HCT116 (cell line): ENCODE measurements at regions of chr4 and their contacts with region 1.

Region 1: DNA sequence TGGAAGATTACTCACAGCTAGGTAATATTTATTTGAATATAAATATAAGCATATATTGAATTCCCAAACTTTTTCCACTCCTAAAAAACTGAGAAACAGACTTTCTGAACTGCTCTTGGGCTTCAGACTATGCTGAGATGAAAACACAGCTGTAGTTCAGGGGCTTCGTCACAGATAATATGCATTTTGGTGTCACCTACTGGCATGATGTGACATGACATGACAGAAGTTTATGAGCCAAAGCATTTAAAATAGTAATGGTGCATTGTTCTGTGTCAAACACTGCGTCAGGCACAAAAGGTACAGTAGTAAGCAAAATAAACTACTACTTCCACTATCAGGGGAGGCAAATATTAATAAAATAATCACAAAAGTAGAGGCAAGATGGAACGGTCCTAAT is 171.3 kb downstream of the BTC start:
- DNase-seq: peak; percentile 82
- ATAC-seq: peak; percentile 37
- H3K4me3 ChIP-seq: no peak overlapping the region
- H3K27ac ChIP-seq: peak overlapping the region; percentile 94
- H3K4me1 ChIP-seq: peaks cover 89 to 99% of the 10 kb centered on the region in 2 experiments
- H3K27me3 ChIP-seq: no peaks in the 10 kb centered on the region
- CTCF ChIP-seq: peak in 2 of 3 experiments; percentile 57 to 81; a peak in 4 of 6 replicates
- POLR2A ChIP-seq: no peak
- RAD21 ChIP-seq: no peak

Region 2: GRCh38 chr4:73698217-73698616 is 924.8 kb before region 1 on chr4:
- CTCF ChIA-PET with region 1: no interaction called
- POLR2A ChIA-PET with region 1: no interaction called
- RAD21 ChIA-PET with region 1: no interaction called
- intact Hi-C with region 1: no loop called
- DNase-seq: no peak
- ATAC-seq: no peak
- H3K4me3 ChIP-seq: no peak overlapping the region
- H3K27ac ChIP-seq: no peak overlapping the region
- H3K4me1 ChIP-seq: peaks cover 0 to 3% of the 10 kb centered on the region in 2 experiments; a peak in 1 of 4 replicates
- H3K27me3 ChIP-seq: no peaks in the 10 kb centered on the region
- CTCF ChIP-seq: no peak
- POLR2A ChIP-seq: no peak
- RAD21 ChIP-seq: no peak

Region 3: DNA sequence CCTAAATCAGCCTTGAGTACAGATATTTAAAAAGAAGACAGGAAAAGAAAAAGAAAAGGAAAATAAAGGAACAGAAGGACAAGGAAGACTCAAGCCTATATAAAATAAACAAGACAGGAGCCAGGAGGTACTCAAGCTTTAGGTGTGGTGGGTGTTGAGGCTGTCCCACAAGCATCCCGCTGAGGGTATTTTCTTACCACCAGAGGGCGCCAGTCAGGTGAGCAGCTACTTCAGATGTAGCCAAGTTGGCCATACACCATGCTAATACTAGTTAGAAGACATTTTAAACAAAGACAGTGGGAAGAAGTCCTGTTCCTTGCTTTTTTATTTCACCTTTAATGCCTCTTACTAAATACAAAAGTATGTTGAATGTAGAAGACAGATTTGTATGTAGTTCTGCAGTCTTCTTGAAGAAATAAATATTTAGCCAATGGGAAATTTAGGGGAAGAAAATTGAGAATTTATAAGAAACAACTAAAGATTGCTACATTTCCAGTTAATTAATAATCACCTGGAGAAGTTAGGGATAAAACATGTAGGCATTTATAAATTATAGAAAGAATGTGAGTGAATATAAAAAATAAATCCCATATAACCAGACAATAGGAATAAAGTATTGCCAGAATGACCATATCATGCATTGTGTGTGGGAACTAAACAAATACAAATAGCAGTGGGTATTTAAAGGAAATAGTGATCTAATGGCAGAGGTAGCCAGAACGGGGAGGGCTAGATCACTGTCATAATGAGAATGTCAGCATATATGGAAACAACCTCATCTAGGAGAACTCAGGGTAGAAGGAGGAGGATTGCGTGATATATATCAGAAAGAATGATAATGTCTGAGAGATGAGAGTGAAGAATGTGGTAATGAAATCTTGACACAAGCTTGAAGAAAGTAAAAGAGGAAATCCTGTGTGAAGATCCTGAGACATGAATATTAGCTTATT is 394.1 kb before region 1 on chr4:
- CTCF ChIA-PET with region 1: interaction called, 3 read pairs
- POLR2A ChIA-PET with region 1: no interaction called
- RAD21 ChIA-PET with region 1: no interaction called
- intact Hi-C with region 1: loop called (anchors 5 kb)
- DNase-seq: peak; percentile 72
- ATAC-seq: peak; percentile 92
- H3K4me3 ChIP-seq: no peak overlapping the region
- H3K27ac ChIP-seq: no peak overlapping the region
- H3K4me1 ChIP-seq: peaks cover 3 to 35% of the 10 kb centered on the region in 2 experiments
- H3K27me3 ChIP-seq: no peaks in the 10 kb centered on the region
- CTCF ChIP-seq: peak; percentile 81 to 97 (median 89); a peak in 5 of 6 replicates
- POLR2A ChIP-seq: no peak
- RAD21 ChIP-seq: peak; percentile 87

Region 4: DNA sequence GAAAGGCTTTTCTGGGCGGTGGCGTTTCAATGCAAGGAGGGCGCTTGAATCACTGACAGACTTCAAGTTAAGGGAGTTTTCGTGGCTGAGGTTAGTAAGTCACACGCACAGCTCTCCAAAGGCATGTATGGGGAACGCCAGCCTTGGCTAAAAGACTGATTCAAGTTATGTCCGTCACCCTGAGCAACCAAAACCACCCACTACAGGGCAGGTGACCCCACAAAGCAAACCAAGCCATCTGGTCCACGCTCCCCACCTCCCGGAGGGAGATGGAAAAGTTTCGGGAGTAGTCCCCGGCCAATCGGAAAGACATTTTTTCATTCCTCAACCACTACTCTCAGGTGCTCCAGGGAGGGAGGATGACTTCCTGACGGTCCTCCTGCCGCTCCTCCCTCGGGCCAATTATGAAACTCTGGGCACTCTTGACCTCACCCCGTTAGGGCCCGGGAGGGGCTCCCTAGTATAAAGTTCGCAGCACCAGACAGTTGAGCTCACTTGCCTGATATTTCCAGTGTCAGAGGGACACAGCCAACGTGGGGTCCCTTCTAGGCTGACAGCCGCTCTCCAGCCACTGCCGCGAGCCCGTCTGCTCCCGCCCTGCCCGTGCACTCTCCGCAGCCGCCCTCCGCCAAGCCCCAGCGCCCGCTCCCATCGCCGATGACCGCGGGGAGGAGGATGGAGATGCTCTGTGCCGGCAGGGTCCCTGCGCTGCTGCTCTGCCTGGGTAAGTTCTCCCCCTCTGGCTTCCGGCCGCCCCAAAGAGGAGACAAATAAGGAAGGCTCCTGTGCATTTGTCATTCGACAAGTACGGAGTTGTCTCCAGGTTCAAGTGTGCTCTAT is 258.2 kb before region 1 on chr4 and contains the start of gene EREG:
- CTCF ChIA-PET with region 1: no interaction called
- POLR2A ChIA-PET with region 1: interaction called, 15 read pairs
- RAD21 ChIA-PET with region 1: interaction called in 1 of 2 experiments, 3 read pairs
- intact Hi-C with region 1: no loop called
- DNase-seq: peak; percentile 74
- ATAC-seq: peak; percentile 71
- H3K4me3 ChIP-seq: peak within 1 kb of the TSS; percentile 76 to 91
- H3K27ac ChIP-seq: peak within 1 kb of the TSS; percentile 94
- H3K4me1 ChIP-seq: peaks cover 50 to 89% of the 10 kb centered on the region in 2 experiments
- H3K27me3 ChIP-seq: no peaks in the 10 kb centered on the region
- CTCF ChIP-seq: no peak
- POLR2A ChIP-seq: peak; percentile 76
- RAD21 ChIP-seq: no peak
- total RNA-seq, gene EREG: 498 TPM

Region 5: GRCh38 chr4:74394476-74395136 is 228.4 kb before region 1 on chr4:
- CTCF ChIA-PET with region 1: no interaction called
- POLR2A ChIA-PET with region 1: no interaction called
- RAD21 ChIA-PET with region 1: no interaction called
- intact Hi-C with region 1: loop called (anchors 5 kb)
- DNase-seq: peak; percentile 82
- ATAC-seq: peak; percentile 72
- H3K4me3 ChIP-seq: peak overlapping the region in 1 of 2 experiments; percentile 8; a peak in 2 of 4 replicates
- H3K27ac ChIP-seq: peak overlapping the region; percentile 86
- H3K4me1 ChIP-seq: peaks cover 30 to 66% of the 10 kb centered on the region in 2 experiments
- H3K27me3 ChIP-seq: no peaks in the 10 kb centered on the region
- CTCF ChIP-seq: no peak
- POLR2A ChIP-seq: no peak
- RAD21 ChIP-seq: peak; percentile 33; the same call in 1 of the 2 replicates

Region 6: GRCh38 chr4:74437866-74438265 is 185.2 kb before region 1 on chr4:
- CTCF ChIA-PET with region 1: no interaction called
- POLR2A ChIA-PET with region 1: no interaction called
- RAD21 ChIA-PET with region 1: no interaction called
- intact Hi-C with region 1: no loop called
- DNase-seq: no peak
- ATAC-seq: no peak
- H3K4me3 ChIP-seq: no peak overlapping the region
- H3K27ac ChIP-seq: no peak overlapping the region
- H3K4me1 ChIP-seq: no peaks in the 10 kb centered on the region
- H3K27me3 ChIP-seq: no peaks in the 10 kb centered on the region
- CTCF ChIP-seq: no peak
- POLR2A ChIP-seq: no peak
- RAD21 ChIP-seq: no peak

Region 7: DNA sequence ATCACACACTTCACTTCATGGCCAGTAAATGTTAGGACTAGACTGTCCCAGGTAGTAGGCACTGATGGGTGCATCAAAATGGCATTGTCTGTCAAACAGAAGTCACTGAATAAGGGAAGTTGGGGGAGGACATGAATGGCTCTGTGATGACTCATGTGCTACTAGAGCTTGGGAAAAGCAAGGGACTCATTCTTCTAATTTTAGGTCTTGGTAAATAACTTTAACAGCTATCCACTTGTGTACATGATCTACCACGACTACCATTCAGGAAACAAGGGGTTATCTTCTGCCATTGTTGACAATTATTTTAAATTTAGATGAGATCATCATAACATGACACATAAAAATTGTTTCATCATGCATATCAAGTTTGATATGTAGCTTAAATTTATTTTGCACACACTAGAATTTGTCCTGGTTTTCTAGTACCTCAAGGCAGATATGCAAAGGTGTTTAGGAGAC is 171.8 kb before region 1 on chr4:
- CTCF ChIA-PET with region 1: no interaction called
- POLR2A ChIA-PET with region 1: interaction called, 23 read pairs
- RAD21 ChIA-PET with region 1: no interaction called
- intact Hi-C with region 1: loop called (anchors 2 kb)
- DNase-seq: no peak
- ATAC-seq: peak; percentile 48
- H3K4me3 ChIP-seq: no peak overlapping the region; a peak in 1 of 4 replicates
- H3K27ac ChIP-seq: peak overlapping the region; percentile 85; the same call in 1 of the 2 replicates
- H3K4me1 ChIP-seq: peaks cover 86 to 99% of the 10 kb centered on the region in 2 experiments
- H3K27me3 ChIP-seq: no peaks in the 10 kb centered on the region
- CTCF ChIP-seq: no peak
- POLR2A ChIP-seq: no peak
- RAD21 ChIP-seq: 0 out of 2 replicates have a peak, but pooled peaks have one; percentile 7

Region 8: GRCh38 chr4:74543231-74543670 is 79.8 kb before region 1 on chr4:
- CTCF ChIA-PET with region 1: interaction called, 19 read pairs
- POLR2A ChIA-PET with region 1: interaction called, 145 read pairs
- RAD21 ChIA-PET with region 1: interaction called, 3 read pairs
- intact Hi-C with region 1: loop called (anchors 2 kb)
- DNase-seq: no peak
- ATAC-seq: peak; percentile 21
- H3K4me3 ChIP-seq: peak overlapping the region in 1 of 2 experiments; percentile 16; a peak in 2 of 4 replicates
- H3K27ac ChIP-seq: peak overlapping the region; percentile 92
- H3K4me1 ChIP-seq: peaks cover 85 to 96% of the 10 kb centered on the region in 2 experiments
- H3K27me3 ChIP-seq: no peaks in the 10 kb centered on the region
- CTCF ChIP-seq: no peak
- POLR2A ChIP-seq: no peak
- RAD21 ChIP-seq: no peak

Region 9: DNA sequence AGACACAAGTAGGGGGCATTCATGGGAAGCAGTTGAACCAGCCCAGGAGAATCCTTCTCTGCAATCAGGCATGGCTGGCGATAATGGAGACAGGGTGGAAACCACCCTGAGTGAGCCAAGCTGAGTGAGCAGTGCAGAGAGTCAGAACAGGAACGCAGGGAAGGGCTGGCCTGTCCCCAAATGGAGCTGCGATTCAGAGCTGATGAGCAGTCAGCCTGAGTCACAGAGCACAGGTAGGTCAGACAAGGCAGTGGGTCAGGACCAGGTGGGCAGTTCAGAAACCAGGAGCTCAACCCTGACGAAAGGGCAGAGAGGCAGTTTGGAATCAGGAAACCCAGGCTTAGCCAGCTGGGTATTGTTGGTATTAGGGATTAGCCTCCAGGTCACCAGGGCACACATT is 42.3 kb after region 1 on chr4:
- CTCF ChIA-PET with region 1: interaction called, 15 read pairs
- POLR2A ChIA-PET with region 1: interaction called, 49 read pairs
- RAD21 ChIA-PET with region 1: interaction called in 1 of 2 experiments, 5 read pairs
- intact Hi-C with region 1: no loop called
- DNase-seq: peak; percentile 80
- ATAC-seq: peak; percentile 81
- H3K4me3 ChIP-seq: peak overlapping the region in 1 of 2 experiments; percentile 22; a peak in 2 of 4 replicates
- H3K27ac ChIP-seq: peak overlapping the region; percentile 93
- H3K4me1 ChIP-seq: peaks cover 86 to 99% of the 10 kb centered on the region in 2 experiments
- H3K27me3 ChIP-seq: no peaks in the 10 kb centered on the region
- CTCF ChIP-seq: no peak
- POLR2A ChIP-seq: no peak
- RAD21 ChIP-seq: no peak